ENCODE measurements at regions of chr17 and their contacts with region 1.

Region 1: DNA sequence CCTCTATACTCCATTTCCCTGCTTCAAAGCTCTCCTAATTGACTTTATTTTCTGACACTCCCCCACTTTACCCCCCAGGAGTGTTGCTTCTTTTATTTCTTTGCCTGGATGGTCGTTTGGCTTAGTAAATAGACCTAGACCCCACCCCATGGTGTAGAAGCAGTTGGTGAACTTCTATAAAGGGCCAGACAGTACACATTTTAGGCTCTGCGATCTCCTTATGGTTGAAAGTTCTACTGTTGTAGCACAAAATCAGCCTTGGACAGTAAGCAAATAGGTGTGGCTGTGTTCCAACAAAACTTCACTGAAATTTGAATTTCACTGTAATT is 31.9 kb downstream of the ZNF287 start:
- DNase-seq: no peak
- ATAC-seq: no peak
- H3K4me3 Mint-ChIP-seq: peak overlapping the region; percentile 92
- H3K27ac Mint-ChIP-seq: no peak overlapping the region
- H3K4me1 Mint-ChIP-seq: peaks cover 9% of the 10 kb centered on the region
- H3K27me3 Mint-ChIP-seq: no peaks in the 10 kb centered on the region

Region 2: GRCh38 chr17:16215273-16215964 is 321.7 kb before region 1 on chr17 and contains the start of gene NCOR1:
- CTCF ChIA-PET with region 1: interaction called, 3 read pairs
- POLR2A ChIA-PET with region 1: no interaction called
- intact Hi-C with region 1: loop called in 1 of 2 experiments (anchors 1 kb)
- DNase-seq: peak; percentile 96
- ATAC-seq: peak; percentile 87
- H3K4me3 Mint-ChIP-seq: peak within 1 kb of the TSS; percentile 93
- H3K27ac Mint-ChIP-seq: peak within 1 kb of the TSS; percentile 81
- H3K4me1 Mint-ChIP-seq: peaks cover 42% of the 10 kb centered on the region
- H3K27me3 Mint-ChIP-seq: no peaks in the 10 kb centered on the region
- total RNA-seq, gene NCOR1: 110 to 155 TPM

Region 3: GRCh38 chr17:16491703-16492612 is 45.1 kb before region 1 on chr17 and contains the start of gene LRRC75A:
- CTCF ChIA-PET with region 1: no interaction called
- POLR2A ChIA-PET with region 1: no interaction called
- intact Hi-C with region 1: loop called in 1 of 2 experiments (anchors 1 kb)
- DNase-seq: peak; percentile 72
- ATAC-seq: peak; percentile 87
- H3K4me3 Mint-ChIP-seq: peak within 1 kb of the TSS; percentile 66
- H3K27ac Mint-ChIP-seq: no peak within 1 kb of the TSS
- H3K4me1 Mint-ChIP-seq: peaks cover 5% of the 10 kb centered on the region
- H3K27me3 Mint-ChIP-seq: peaks cover 9% of the 10 kb centered on the region
- total RNA-seq, gene LRRC75A: 1.1 to 1.2 TPM

Region 4: GRCh38 chr17:16568541-16569357 is 31.7 kb after region 1 on chr17 and contains the start of gene ZNF287:
- CTCF ChIA-PET with region 1: interaction called, 10 read pairs
- POLR2A ChIA-PET with region 1: interaction called, 3 read pairs
- intact Hi-C with region 1: loop called (anchors 1 to 2 kb)
- DNase-seq: peak; percentile 96
- ATAC-seq: peak; percentile 99
- H3K4me3 Mint-ChIP-seq: peak within 1 kb of the TSS; percentile 79
- H3K27ac Mint-ChIP-seq: no peak within 1 kb of the TSS
- H3K4me1 Mint-ChIP-seq: peaks cover 14% of the 10 kb centered on the region
- H3K27me3 Mint-ChIP-seq: peaks cover 3% of the 10 kb centered on the region
- total RNA-seq, gene ZNF287: 9.4 TPM

Region 5: DNA sequence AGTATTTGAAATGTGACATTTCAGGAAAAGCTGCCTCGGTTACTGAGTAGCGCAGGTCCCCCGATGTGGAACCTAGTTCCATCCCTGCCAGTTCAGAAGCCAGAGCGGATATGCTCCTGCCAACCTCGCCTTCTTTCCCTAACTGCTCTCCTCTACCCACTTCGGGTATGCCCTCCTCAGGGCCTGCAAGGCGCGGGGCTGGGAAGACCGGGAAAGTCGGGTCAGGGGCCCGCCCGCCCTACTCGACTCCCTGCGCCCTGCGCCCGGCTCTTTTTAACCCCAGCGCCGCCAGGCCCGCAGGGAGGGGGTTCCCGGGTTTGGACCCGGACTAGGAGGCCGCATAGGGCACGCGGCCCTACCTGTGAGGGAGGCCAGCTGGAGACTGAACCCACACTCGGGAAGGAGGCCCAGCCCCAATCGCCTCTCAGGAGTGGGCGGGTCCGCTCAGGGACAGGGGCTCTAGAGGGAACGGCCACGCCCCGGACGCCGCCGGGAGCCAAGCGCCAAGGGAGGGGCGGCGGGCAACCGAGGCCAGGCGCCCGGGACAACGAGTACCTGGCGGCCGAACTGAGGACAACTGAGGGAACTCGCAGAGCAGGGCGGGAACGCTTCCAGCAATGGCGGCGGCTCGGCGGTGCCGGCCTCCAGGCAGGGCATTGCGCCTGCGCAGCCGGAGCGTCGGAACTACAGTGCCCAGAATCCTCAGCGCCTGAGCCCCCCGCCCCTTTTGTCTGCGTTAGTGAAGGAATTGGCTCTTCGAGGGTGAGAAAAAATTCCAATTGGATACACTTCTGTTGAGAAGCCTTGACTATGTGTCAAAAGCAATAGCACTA is 116.3 kb after region 1 on chr17 and contains the start of gene ZNF624:
- CTCF ChIA-PET with region 1: interaction called, 4 read pairs
- POLR2A ChIA-PET with region 1: no interaction called
- intact Hi-C with region 1: loop called (anchors 1 to 5 kb)
- DNase-seq: peak; percentile 94
- ATAC-seq: peak; percentile 97
- H3K4me3 Mint-ChIP-seq: peak within 1 kb of the TSS; percentile 81
- H3K27ac Mint-ChIP-seq: peak within 1 kb of the TSS; percentile 73
- H3K4me1 Mint-ChIP-seq: peaks cover 18% of the 10 kb centered on the region
- H3K27me3 Mint-ChIP-seq: peaks cover 5% of the 10 kb centered on the region
- total RNA-seq, gene ZNF624: 3.7 to 4.4 TPM